Heart left ventricle (tissue), 16 donors: ENCODE measurements at regions of chr14 and their contacts with region 1.

Region 1: DNA sequence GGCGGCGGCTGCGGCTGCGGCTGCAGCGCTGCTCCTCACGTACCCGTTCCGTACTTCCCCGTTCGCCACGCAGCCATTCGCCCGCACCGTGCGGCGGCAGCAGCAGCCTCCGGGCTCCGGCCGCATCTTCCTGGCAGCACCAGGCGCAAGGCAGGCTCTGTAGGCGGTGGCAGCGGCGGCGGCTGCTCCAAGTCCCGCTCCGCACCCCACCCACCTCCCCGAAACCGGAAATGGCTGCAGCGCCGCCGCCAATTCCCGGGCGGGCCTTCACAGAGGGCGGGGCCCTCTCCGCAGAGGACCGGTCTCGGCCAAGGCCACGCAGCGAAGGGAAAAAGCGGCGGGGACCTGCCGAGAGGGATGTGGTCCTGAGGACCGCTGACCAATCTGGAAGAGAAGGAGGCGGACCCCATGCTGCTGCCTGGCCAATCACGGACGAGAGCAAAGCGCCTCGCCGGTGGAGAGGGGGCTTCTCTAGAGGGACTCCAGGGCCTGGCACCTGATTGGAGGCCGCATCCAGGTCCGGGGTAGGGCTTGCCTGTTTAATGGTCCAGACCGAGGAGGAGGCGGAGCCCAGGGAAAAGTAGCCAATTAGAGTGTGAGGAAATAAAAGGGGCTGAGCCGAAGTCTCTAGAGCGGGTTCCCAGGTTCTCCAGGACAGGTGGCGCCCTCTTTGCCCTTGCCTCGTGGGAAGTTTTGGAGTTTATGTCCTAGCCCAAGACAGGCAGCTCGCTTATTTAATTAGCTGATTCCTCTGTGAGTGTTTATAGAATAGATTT is at the start of gene SPTLC2:
- DNase-seq: peak; percentile 99 to 100 (median 99)
- ATAC-seq: peak; percentile 99 to 100 (median 99)
- H3K4me3 ChIP-seq: peak within 1 kb of the TSS; percentile 78 to 94 (median 90)
- H3K27ac ChIP-seq: peak within 1 kb of the TSS; percentile 76 to 91 (median 86)
- H3K4me1 ChIP-seq: peaks cover 0 to 48% (median 13%) of the 10 kb centered on the region in 12 donors
- H3K27me3 ChIP-seq: no peaks in the 10 kb centered on the region
- CTCF ChIP-seq: peak in 4 of 12 donors; percentile 9 to 34 (median 24)
- POLR2A ChIP-seq: peak in 1 of 2 donors; percentile 82
- total RNA-seq, gene SPTLC2: 8.2 to 25.2 (median 11.2) TPM

Region 2: DNA sequence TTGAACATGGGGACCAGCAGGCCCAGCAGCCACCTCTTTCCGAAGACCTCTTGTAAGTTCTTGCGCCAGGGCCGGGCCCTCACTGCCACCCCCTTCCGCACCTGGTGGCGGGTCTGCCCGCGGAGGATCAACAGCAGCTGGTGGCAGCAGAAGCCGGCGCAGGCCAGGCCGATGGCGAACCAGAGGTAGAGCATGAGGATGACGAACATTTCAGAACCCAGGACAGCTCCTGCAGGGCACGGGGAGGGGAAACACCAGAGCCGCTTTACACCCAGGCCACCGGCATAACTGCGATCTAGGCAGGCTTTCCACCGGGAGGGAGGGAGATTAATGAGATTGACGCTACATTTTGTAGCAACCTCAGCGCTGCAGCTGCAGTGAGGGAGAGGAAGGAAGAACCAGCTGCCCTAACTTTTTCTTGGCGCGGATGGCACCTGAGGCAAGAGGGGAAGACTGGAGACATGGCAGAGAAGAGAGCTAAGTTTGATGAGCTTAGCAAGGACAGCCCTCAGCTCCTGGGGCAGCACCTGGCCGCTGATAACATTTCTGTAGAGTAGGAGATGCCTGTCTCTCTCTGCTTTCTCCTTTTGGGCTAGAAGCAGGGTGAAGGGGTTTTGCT is 482.8 kb before region 1 on chr14:
- intact Hi-C with region 1: no loop called
- DNase-seq: peak in 3 of 5 donors; percentile 57 to 66 (median 66)
- ATAC-seq: peak; percentile 30 to 89 (median 82)
- H3K4me3 ChIP-seq: no peak overlapping the region
- H3K27ac ChIP-seq: no peak overlapping the region
- H3K4me1 ChIP-seq: no peaks in the 10 kb centered on the region
- H3K27me3 ChIP-seq: peaks cover 7 to 61% (median 25%) of the 10 kb centered on the region in 9 donors
- CTCF ChIP-seq: no peak
- POLR2A ChIP-seq: no peak

Region 3: GRCh38 chr14:77574446-77575115 is 42.1 kb before region 1 on chr14:
- intact Hi-C with region 1: no loop called
- DNase-seq: no peak
- ATAC-seq: no peak
- H3K4me3 ChIP-seq: no peak overlapping the region
- H3K27ac ChIP-seq: no peak overlapping the region
- H3K4me1 ChIP-seq: peaks cover 0 to 17% (median 4%) of the 10 kb centered on the region in 12 donors
- H3K27me3 ChIP-seq: no peaks in the 10 kb centered on the region
- CTCF ChIP-seq: no peak
- POLR2A ChIP-seq: no peak

Region 4: GRCh38 chr14:77641534-77642341 is 25.1 kb after region 1 on chr14:
- intact Hi-C with region 1: loop called in 1 of 10 experiments (anchors 2 kb)
- DNase-seq: peak; percentile 73 to 91 (median 85)
- ATAC-seq: peak; percentile 83 to 94 (median 90)
- H3K4me3 ChIP-seq: peak overlapping the region in 11 of 12 donors; percentile 13 to 66 (median 53)
- H3K27ac ChIP-seq: peak overlapping the region; percentile 73 to 95 (median 81)
- H3K4me1 ChIP-seq: peaks cover 0 to 21% (median 12%) of the 10 kb centered on the region in 12 donors
- H3K27me3 ChIP-seq: no peaks in the 10 kb centered on the region
- CTCF ChIP-seq: no peak
- POLR2A ChIP-seq: peak in 1 of 2 donors; percentile 37